Motor neuron (in vitro differentiated cells): ENCODE measurements at regions of chr1 and their contacts with region 1.

Region 1: DNA sequence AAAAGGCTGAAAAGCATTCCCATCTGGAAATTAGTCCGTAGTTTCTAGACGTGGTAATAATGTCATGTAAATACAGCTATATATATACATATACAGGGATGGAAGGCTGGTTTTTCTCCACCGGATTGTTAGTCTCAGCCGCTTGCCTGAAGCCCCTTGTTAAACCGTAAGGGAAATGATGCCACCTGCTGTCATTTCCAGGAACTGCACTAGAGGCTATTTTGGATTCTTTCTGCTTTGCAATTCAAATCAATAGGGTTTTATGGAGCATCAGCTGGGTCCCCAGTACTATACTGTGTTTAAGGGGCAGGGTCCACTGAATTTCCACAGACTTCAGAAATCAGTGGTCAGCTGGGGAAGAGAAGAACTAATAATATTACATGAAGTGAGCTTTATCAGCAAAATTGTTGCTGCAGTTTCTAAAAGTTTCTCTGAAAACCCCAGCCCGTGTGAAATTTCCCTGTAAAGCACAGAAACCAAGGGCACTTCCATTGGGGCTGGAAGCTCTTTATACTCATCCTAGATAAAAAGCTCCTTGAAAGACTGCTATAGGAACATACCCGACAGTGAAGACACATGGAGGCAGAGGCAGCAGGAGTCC is 33.8 kb upstream of the MPZL1 start:
- ATAC-seq: peak; percentile 47 to 91 (median 82)
- H3K4me3 ChIP-seq: no peak overlapping the region
- H3K27ac ChIP-seq: no peak overlapping the region
- H3K4me1 ChIP-seq: peaks cover under 1 to 4% of the 10 kb centered on the region in 2 donors

Region 2: GRCh38 chr1:167387251-167387910 is 300.6 kb before region 1 on chr1:
- in situ Hi-C with region 1: loop called in 1 of 9 experiments (anchors 25 kb)
- ATAC-seq: no peak
- H3K4me3 ChIP-seq: no peak overlapping the region
- H3K27ac ChIP-seq: no peak overlapping the region
- H3K4me1 ChIP-seq: no peaks in the 10 kb centered on the region

Region 3: GRCh38 chr1:167599957-167600581 is 88.0 kb before region 1 on chr1:
- in situ Hi-C with region 1: loop called in 2 of 9 experiments (anchors 10 kb)
- ATAC-seq: peak; percentile 56 to 92 (median 68)
- H3K4me3 ChIP-seq: no peak overlapping the region
- H3K27ac ChIP-seq: no peak overlapping the region
- H3K4me1 ChIP-seq: no peaks in the 10 kb centered on the region

Region 4: GRCh38 chr1:167617153-167618147 is 70.6 kb before region 1 on chr1:
- in situ Hi-C with region 1: loop called in 1 of 9 experiments (anchors 10 kb)
- ATAC-seq: peak in 7 of 8 experiments; percentile 34 to 93 (median 67)
- H3K4me3 ChIP-seq: no peak overlapping the region
- H3K27ac ChIP-seq: peak overlapping the region in 1 of 2 donors; percentile 13
- H3K4me1 ChIP-seq: peaks cover 19 to 24% of the 10 kb centered on the region in 2 donors